CD8-positive, alpha-beta T cell (primary cell): ENCODE measurements at regions of chr11 and their contacts with region 1.

Region 1: DNA sequence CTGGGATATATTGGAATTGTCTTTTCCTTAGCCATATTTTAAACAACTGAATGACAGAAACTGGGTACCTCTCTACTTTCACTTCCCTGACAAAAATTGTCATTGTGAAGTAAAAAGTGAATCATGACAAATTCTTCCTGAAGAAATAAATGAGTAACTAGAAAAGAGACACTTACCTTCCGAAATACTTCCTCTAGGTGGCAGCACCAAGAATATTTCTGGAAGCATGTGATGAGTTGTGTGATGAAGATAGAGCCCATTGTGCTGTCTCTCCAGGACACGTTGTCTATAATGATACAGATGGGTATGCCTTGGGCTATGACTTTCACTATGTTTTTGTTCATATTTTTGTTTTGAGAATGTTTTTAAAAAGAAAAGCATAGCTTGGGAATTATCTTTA is 21.5 kb downstream of the CASP4 start:
- DNase-seq: peak in 4 of 9 experiments; percentile 19 to 75 (median 44)
- ATAC-seq: peak; percentile 78
- H3K4me3 ChIP-seq: no peak overlapping the region
- H3K4me3 Mint-ChIP-seq: no peak overlapping the region
- H3K27ac ChIP-seq: no peak overlapping the region
- H3K27ac Mint-ChIP-seq: peak overlapping the region; percentile 5
- H3K4me1 ChIP-seq: no peaks in the 10 kb centered on the region
- H3K4me1 Mint-ChIP-seq: peaks cover 13% of the 10 kb centered on the region
- H3K27me3 ChIP-seq: no peaks in the 10 kb centered on the region
- H3K27me3 Mint-ChIP-seq: no peaks in the 10 kb centered on the region
- CTCF ChIP-seq: peak; percentile 71

Region 2: DNA sequence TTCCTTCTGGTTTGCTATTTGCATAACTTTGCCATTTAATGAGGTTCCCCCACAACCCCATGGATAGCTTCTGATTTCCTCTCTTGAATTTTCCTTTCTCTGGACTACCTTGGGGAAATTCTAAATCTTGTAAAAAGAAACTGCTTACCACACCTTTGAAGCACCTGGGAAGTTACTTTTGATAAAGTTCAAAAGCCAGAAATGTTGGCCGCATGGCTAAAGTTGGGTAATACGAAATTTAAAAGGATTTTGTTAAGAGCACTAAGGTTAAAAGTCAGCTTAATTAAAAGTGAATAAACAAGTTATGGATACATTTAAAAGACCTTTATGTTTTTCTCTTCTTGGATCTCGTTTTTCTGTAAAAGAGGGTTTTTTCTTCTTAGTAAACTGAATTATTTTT is 15.9 kb after region 1 on chr11:
- CTCF ChIA-PET with region 1: interaction called, 5 read pairs
- POLR2A ChIA-PET with region 1: no interaction called
- intact Hi-C with region 1: loop called in 1 of 2 experiments (anchors 2 kb)
- DNase-seq: no peak
- ATAC-seq: no peak
- H3K4me3 ChIP-seq: no peak overlapping the region
- H3K4me3 Mint-ChIP-seq: no peak overlapping the region
- H3K27ac ChIP-seq: no peak overlapping the region
- H3K27ac Mint-ChIP-seq: no peak overlapping the region
- H3K4me1 ChIP-seq: peaks cover 53% of the 10 kb centered on the region
- H3K4me1 Mint-ChIP-seq: peaks cover 85% of the 10 kb centered on the region
- H3K27me3 ChIP-seq: no peaks in the 10 kb centered on the region
- H3K27me3 Mint-ChIP-seq: no peaks in the 10 kb centered on the region
- CTCF ChIP-seq: no peak

Region 3: GRCh38 chr11:105000797-105001196 is 53.9 kb after region 1 on chr11:
- CTCF ChIA-PET with region 1: interaction called, 3 read pairs
- POLR2A ChIA-PET with region 1: no interaction called
- intact Hi-C with region 1: loop called (anchors 1 to 5 kb)
- DNase-seq: peak; percentile 5 to 75 (median 59)
- ATAC-seq: peak; percentile 89
- H3K4me3 ChIP-seq: no peak overlapping the region
- H3K4me3 Mint-ChIP-seq: no peak overlapping the region
- H3K27ac ChIP-seq: no peak overlapping the region
- H3K27ac Mint-ChIP-seq: peak overlapping the region; percentile 20
- H3K4me1 ChIP-seq: no peaks in the 10 kb centered on the region
- H3K4me1 Mint-ChIP-seq: peaks cover 5% of the 10 kb centered on the region
- H3K27me3 ChIP-seq: no peaks in the 10 kb centered on the region
- H3K27me3 Mint-ChIP-seq: no peaks in the 10 kb centered on the region
- CTCF ChIP-seq: peak; percentile 70